GM12878 (cell line): ENCODE measurements at regions of chr19 and their contacts with region 1.

Region 1: GRCh38 chr19:12847159-12848139 is 9.1 kb downstream of the MAST1 start:
- DNase-seq: no peak
- ATAC-seq: peak; percentile 100
- H3K4me3 ChIP-seq: no peak overlapping the region
- H3K27ac ChIP-seq: no peak overlapping the region
- H3K4me1 ChIP-seq: no peaks in the 10 kb centered on the region; the same call in 1 of the 2 replicates
- H3K27me3 ChIP-seq: no peaks in the 10 kb centered on the region; a peak in 1 of 4 replicates
- CTCF ChIP-seq: peak; percentile 92 to 98 (median 97); a peak in 5 of 6 replicates
- EP300 ChIP-seq: no peak
- POLR2A ChIP-seq: no peak
- RAD21 ChIP-seq: peak; percentile 88

Region 2: DNA sequence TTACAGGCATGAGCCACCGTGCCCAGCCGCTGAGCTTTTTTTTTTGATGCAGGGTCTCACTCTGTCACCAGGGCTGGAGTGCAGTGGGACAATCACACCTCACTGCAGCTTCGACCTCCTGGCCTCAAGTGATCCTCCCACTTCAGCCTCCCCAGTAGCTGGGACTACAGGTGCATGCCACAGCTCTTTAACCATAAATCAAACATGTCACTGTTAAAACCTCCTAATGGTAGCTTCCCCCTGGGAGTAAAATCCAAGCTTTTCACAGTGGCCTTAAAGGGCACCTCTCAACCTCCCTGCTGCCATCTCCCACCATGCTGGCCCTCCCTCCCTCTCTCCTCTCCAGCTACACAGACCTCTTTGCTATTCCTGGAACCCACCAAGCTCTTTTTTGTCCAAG is 161.6 kb before region 1 on chr19:
- CTCF ChIA-PET with region 1: no interaction called
- POLR2A ChIA-PET with region 1: no interaction called
- RAD21 ChIA-PET with region 1: no interaction called
- SMC1A ChIA-PET with region 1: no interaction called
- in situ Hi-C with region 1: no loop called
- intact Hi-C with region 1: no loop called
- DNase-seq: no peak
- ATAC-seq: no peak
- H3K4me3 ChIP-seq: no peak overlapping the region
- H3K27ac ChIP-seq: no peak overlapping the region
- H3K4me1 ChIP-seq: no peaks in the 10 kb centered on the region
- H3K27me3 ChIP-seq: no peaks in the 10 kb centered on the region
- CTCF ChIP-seq: no peak
- EP300 ChIP-seq: no peak
- POLR2A ChIP-seq: no peak
- RAD21 ChIP-seq: no peak

Region 3: GRCh38 chr19:12757544-12758274 is 89.7 kb before region 1 on chr19:
- CTCF ChIA-PET with region 1: interaction called, 235 read pairs
- POLR2A ChIA-PET with region 1: no interaction called
- RAD21 ChIA-PET with region 1: interaction called, 76 read pairs
- SMC1A ChIA-PET with region 1: interaction called, 17 read pairs
- in situ Hi-C with region 1: no loop called
- intact Hi-C with region 1: loop called (anchors 1 kb)
- DNase-seq: no peak
- ATAC-seq: peak; percentile 93
- H3K4me3 ChIP-seq: peak overlapping the region; percentile 32; the same call in 1 of the 2 replicates
- H3K27ac ChIP-seq: no peak overlapping the region
- H3K4me1 ChIP-seq: no peaks in the 10 kb centered on the region
- H3K27me3 ChIP-seq: peaks cover 0 to 2% of the 10 kb centered on the region in 2 experiments; a peak in 1 of 4 replicates
- CTCF ChIP-seq: peak; percentile 82 to 91 (median 89)
- EP300 ChIP-seq: no peak
- POLR2A ChIP-seq: no peak
- RAD21 ChIP-seq: peak; percentile 49

Region 4: DNA sequence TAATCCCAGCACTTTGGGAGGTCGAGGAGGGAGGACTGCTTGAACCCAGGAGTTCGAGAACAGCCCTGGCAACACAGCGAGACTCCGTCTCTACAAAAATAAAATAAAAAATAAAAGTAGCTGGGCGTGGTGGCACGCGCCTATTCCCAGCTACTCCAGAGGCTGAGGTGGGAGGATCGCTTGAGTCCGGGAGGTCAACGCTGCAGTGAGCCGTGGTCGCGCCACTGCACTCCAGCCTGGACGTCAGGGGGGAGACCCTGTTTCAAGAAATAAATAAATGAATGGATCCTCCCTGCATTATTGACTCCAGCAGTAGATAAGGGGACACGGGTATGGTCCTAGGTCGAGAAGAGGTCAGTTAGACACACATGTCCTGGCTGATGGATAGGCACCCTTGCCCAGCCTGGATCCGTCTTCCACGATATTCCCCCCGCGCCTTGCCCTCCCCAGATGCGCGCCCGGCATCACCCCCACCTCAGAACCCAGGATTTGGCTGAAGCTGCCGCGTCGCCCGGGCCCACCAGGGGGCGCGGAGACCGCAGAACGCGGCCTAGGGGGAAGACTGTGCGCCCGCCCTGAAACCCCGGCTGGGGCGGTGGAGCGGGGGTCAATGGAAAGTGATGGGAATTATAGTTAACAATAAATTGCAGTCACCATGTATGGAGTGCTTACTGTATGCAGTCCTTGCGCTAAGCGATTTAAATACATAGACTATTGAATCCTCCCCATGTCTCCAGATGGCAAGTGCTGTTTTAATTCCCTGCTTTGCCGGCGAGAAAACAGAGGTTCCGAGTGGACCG is 70.0 kb before region 1 on chr19:
- CTCF ChIA-PET with region 1: interaction called, 17 read pairs
- POLR2A ChIA-PET with region 1: interaction called, 3 read pairs
- RAD21 ChIA-PET with region 1: interaction called, 7 read pairs
- SMC1A ChIA-PET with region 1: interaction called, 3 read pairs
- in situ Hi-C with region 1: no loop called
- intact Hi-C with region 1: no loop called
- DNase-seq: no peak
- ATAC-seq: peak; percentile 68
- H3K4me3 ChIP-seq: peak overlapping the region; percentile 76
- H3K27ac ChIP-seq: peak overlapping the region; percentile 91
- H3K4me1 ChIP-seq: peaks cover 30% of the 10 kb centered on the region
- H3K27me3 ChIP-seq: no peaks in the 10 kb centered on the region
- CTCF ChIP-seq: peak; percentile 90 to 98 (median 95)
- EP300 ChIP-seq: no peak
- POLR2A ChIP-seq: no peak
- RAD21 ChIP-seq: peak; percentile 89

Region 5: DNA sequence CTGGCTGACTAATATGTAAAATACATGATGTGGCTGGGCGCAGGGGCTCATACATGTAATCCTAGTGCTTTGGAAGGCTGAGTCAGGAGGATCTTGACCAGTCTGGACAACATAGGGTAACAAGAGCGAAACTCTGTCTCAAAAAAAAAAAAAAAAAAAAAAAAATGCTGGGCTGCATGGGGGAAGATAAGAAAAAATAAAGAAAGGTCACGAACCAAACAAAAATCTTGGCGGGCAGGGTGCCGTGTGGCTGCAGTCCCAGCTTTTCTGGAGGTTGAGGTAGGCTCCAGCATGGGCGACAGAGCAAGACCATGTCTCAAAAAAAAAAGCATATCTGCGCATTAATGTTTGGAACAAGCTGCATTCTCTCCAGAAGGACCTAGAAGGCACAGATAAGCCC is 32.4 kb before region 1 on chr19:
- CTCF ChIA-PET with region 1: interaction called, 10 read pairs
- POLR2A ChIA-PET with region 1: no interaction called
- RAD21 ChIA-PET with region 1: no interaction called
- SMC1A ChIA-PET with region 1: no interaction called
- in situ Hi-C with region 1: no loop called
- intact Hi-C with region 1: no loop called
- DNase-seq: no peak
- ATAC-seq: no peak
- H3K4me3 ChIP-seq: no peak overlapping the region
- H3K27ac ChIP-seq: no peak overlapping the region
- H3K4me1 ChIP-seq: no peaks in the 10 kb centered on the region
- H3K27me3 ChIP-seq: no peaks in the 10 kb centered on the region
- CTCF ChIP-seq: no peak
- EP300 ChIP-seq: no peak
- POLR2A ChIP-seq: no peak
- RAD21 ChIP-seq: no peak

Region 6: GRCh38 chr19:12837225-12837624 is 10.2 kb before region 1 on chr19:
- CTCF ChIA-PET with region 1: interaction called, 12 read pairs
- POLR2A ChIA-PET with region 1: no interaction called
- RAD21 ChIA-PET with region 1: interaction called, 4 read pairs
- SMC1A ChIA-PET with region 1: no interaction called
- in situ Hi-C with region 1: no loop called
- intact Hi-C with region 1: no loop called
- DNase-seq: no peak
- ATAC-seq: no peak
- H3K4me3 ChIP-seq: no peak overlapping the region
- H3K27ac ChIP-seq: no peak overlapping the region
- H3K4me1 ChIP-seq: peaks cover 7% of the 10 kb centered on the region; the same call in 1 of the 2 replicates
- H3K27me3 ChIP-seq: peaks cover 10 to 46% of the 10 kb centered on the region in 2 experiments
- CTCF ChIP-seq: no peak
- EP300 ChIP-seq: no peak
- POLR2A ChIP-seq: no peak
- RAD21 ChIP-seq: no peak

Region 7: GRCh38 chr19:12881172-12881808 is 33.8 kb after region 1 on chr19 and contains the start of gene DNASE2:
- CTCF ChIA-PET with region 1: interaction called, 17 read pairs
- POLR2A ChIA-PET with region 1: no interaction called
- RAD21 ChIA-PET with region 1: no interaction called
- SMC1A ChIA-PET with region 1: no interaction called
- in situ Hi-C with region 1: no loop called
- intact Hi-C with region 1: no loop called
- DNase-seq: peak; percentile 85
- ATAC-seq: peak; percentile 88
- H3K4me3 ChIP-seq: peak within 1 kb of the TSS; percentile 90
- H3K27ac ChIP-seq: peak within 1 kb of the TSS; percentile 82
- H3K4me1 ChIP-seq: peaks cover 16% of the 10 kb centered on the region
- H3K27me3 ChIP-seq: no peaks in the 10 kb centered on the region; a peak in 1 of 4 replicates
- CTCF ChIP-seq: no peak
- EP300 ChIP-seq: peak in 1 of 2 experiments; percentile 59; a peak in 1 of 4 replicates
- POLR2A ChIP-seq: peak; percentile 88
- RAD21 ChIP-seq: no peak
- polyA plus RNA-seq, gene DNASE2: 4.9 to 7.8 TPM

Region 8: DNA sequence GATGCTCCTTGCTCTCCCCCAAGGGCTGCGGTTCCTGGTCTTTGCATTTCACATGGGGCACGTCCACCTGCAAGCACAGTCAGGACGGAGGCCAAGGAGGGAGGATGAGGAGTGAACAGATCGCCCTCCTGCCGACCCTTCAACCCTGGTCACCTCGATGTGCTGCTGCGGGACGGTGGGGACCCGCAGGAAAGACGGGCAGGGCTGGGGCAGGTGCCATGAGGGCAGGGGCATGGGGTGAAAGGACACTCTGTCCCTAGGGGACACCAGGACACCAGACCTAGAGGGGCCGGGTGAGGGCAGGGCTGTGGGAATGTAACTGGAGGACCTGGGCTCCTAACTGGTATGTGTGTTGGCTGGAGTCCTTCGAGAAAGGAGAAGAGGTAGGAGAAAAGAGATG is 70.8 kb after region 1 on chr19:
- CTCF ChIA-PET with region 1: no interaction called
- POLR2A ChIA-PET with region 1: no interaction called
- RAD21 ChIA-PET with region 1: no interaction called
- SMC1A ChIA-PET with region 1: no interaction called
- in situ Hi-C with region 1: no loop called
- intact Hi-C with region 1: no loop called
- DNase-seq: no peak
- ATAC-seq: no peak
- H3K4me3 ChIP-seq: no peak overlapping the region
- H3K27ac ChIP-seq: no peak overlapping the region
- H3K4me1 ChIP-seq: peaks cover 10% of the 10 kb centered on the region
- H3K27me3 ChIP-seq: no peaks in the 10 kb centered on the region
- CTCF ChIP-seq: no peak
- EP300 ChIP-seq: no peak
- POLR2A ChIP-seq: no peak; the same call in 1 of the 2 replicates
- RAD21 ChIP-seq: no peak